ENCODE measurements at regions of chr1 and their contacts with region 1.

Region 1: GRCh38 chr1:246554201-246554600 is 11.9 kb downstream of the TFB2M start:
- DNase-seq: no peak
- H3K4me3 ChIP-seq: no peak overlapping the region
- H3K27ac ChIP-seq: no peak overlapping the region
- H3K4me1 ChIP-seq: no peaks in the 10 kb centered on the region
- H3K27me3 ChIP-seq: no peaks in the 10 kb centered on the region
- CTCF ChIP-seq: no peak
- POLR2A ChIP-seq: no peak

Region 2: GRCh38 chr1:246647113-246647512 is 92.9 kb after region 1 on chr1:
- intact Hi-C with region 1: loop called in 1 of 2 experiments (anchors 10 kb)
- DNase-seq: peak in 4 of 7 donors; percentile 17 to 78 (median 28)
- H3K4me3 ChIP-seq: no peak overlapping the region
- H3K27ac ChIP-seq: peak overlapping the region in 1 of 5 donors; percentile 31
- H3K4me1 ChIP-seq: peaks cover 0 to 5% of the 10 kb centered on the region in 2 donors
- H3K27me3 ChIP-seq: no peaks in the 10 kb centered on the region
- CTCF ChIP-seq: peak in 3 of 6 experiments; percentile 40 to 44 (median 42)
- POLR2A ChIP-seq: no peak

Measured in adrenal gland (tissue), 19 donors.